Kidney (tissue), 22 donors: ENCODE measurements at regions of chr4 and their contacts with region 1.

Region 1: GRCh38 chr4:139295206-139295941 is 5.9 kb upstream of the NAA15 start:
- DNase-seq: peak; percentile 96 to 99 (median 97)
- H3K4me3 ChIP-seq: peak overlapping the region; percentile 83 to 94 (median 87)
- H3K27ac ChIP-seq: peak overlapping the region; percentile 64 to 93
- H3K4me1 ChIP-seq: peaks cover 0 to 3% (median 0%) of the 10 kb centered on the region in 3 donors
- H3K27me3 ChIP-seq: no peaks in the 10 kb centered on the region
- CTCF ChIP-seq: peak; percentile 97

Region 2: DNA sequence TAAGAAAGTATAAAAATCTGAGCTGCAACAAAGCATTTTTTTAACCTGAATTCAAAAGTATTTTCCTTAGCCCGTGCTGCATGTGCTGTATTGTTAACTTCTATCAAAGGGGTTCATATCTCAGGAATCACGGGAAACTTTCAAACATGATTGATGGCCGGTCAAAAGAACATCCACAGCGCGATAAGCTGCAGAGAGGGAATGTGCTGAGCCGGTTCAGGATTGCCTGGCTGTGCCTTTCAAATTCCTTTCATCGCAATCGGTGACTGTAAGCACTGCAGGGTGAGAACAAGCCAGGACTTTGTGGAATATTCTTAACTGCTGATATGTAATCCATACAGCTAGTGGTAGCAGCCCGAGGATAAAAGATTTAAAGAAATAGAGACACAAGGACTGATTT is 490.7 kb before region 1 on chr4:
- intact Hi-C with region 1: no loop called
- DNase-seq: peak in 2 of 5 donors; percentile 26 to 54
- H3K4me3 ChIP-seq: no peak overlapping the region
- H3K27ac ChIP-seq: no peak overlapping the region
- H3K4me1 ChIP-seq: no peaks in the 10 kb centered on the region
- H3K27me3 ChIP-seq: no peaks in the 10 kb centered on the region
- CTCF ChIP-seq: no peak

Region 3: GRCh38 chr4:139099366-139099982 is 195.9 kb before region 1 on chr4:
- intact Hi-C with region 1: loop called (anchors 10 kb)
- DNase-seq: peak in 4 of 5 donors; percentile 78 to 96 (median 88)
- H3K4me3 ChIP-seq: no peak overlapping the region
- H3K27ac ChIP-seq: no peak overlapping the region
- H3K4me1 ChIP-seq: peaks cover 0 to 6% (median 0%) of the 10 kb centered on the region in 3 donors
- H3K27me3 ChIP-seq: no peaks in the 10 kb centered on the region
- CTCF ChIP-seq: peak; percentile 89